Activated CD4-positive, alpha-beta T cell treated with anti-CD3 and anti-CD28 coated beads for 36 hours (primary cell): ENCODE measurements at regions of chr9 and their contacts with region 1.

Region 1: GRCh38 chr9:35138682-35139470 is 22.9 kb upstream of the UNC13B start:
- DNase-seq: no peak
- ATAC-seq: no peak
- H3K4me3 Mint-ChIP-seq: no peak overlapping the region
- H3K27ac Mint-ChIP-seq: no peak overlapping the region
- H3K4me1 Mint-ChIP-seq: no peaks in the 10 kb centered on the region
- H3K27me3 Mint-ChIP-seq: no peaks in the 10 kb centered on the region

Region 2: DNA sequence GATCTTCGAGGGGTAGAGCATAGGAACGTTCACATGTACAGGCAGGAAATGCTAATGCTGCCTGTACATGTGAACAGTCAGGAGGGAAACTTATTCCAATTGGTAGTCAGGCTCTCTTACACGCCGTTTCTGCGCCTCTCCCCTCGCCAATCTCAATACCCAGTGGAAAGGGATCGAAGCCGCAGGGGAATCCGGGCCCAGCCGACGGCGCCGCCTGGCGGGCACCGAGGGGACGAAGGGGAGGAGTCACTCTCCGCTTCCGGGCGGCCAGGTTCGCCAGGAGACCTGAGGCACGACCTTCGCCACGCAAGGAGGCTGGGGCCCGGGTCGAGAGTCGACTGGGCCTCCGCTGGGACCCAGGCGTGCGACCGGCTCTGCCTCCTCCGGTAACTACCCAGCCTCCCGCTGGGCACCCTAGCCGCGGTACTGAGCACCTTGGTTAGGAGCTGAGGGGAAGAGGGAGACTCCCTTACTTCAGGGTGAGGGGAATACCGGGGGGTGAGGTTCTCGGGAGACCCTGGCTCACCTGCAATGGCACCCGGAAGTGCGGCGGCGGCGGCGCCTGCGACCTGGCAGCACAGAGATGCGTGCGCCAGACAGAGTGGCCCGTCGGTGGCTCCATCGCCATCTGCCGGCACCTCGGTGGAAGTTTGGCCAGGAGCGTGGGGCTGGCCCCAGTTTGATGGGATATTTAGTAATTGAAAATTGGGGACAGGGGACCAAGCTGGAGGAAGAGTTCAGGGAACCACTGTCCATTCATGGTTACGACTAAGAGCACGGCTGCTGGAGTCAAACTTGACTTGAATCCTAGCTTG is 42.6 kb before region 1 on chr9 and contains the start of gene PIGO:
- CTCF ChIA-PET with region 1: no interaction called
- POLR2A ChIA-PET with region 1: no interaction called
- intact Hi-C with region 1: no loop called
- DNase-seq: peak; percentile 95
- ATAC-seq: peak; percentile 91
- H3K4me3 Mint-ChIP-seq: peak within 1 kb of the TSS; percentile 85
- H3K27ac Mint-ChIP-seq: peak within 1 kb of the TSS; percentile 92
- H3K4me1 Mint-ChIP-seq: peaks cover 25% of the 10 kb centered on the region
- H3K27me3 Mint-ChIP-seq: no peaks in the 10 kb centered on the region
- total RNA-seq, gene PIGO: 21.0 to 27.2 TPM

Region 3: DNA sequence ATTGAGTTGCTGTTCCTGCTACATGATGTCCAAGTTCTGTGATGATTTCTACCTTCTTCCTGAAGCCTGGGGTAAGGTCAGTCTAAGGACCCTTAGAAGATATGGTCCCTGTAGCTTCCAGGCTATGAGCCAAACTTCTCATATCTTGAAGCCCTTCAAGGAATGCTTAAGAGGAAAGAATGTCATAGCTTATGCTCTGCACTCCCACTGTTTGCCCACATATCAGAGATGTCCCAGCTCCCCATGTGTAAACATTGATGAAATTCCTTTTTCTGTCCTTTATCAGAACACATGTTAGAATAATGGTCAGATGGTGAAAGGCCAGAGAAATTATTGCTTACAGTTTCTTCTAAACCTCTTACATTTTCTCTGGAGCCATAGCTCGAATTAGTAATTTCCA is 309.6 kb after region 1 on chr9:
- CTCF ChIA-PET with region 1: no interaction called
- POLR2A ChIA-PET with region 1: no interaction called
- intact Hi-C with region 1: loop called in 1 of 2 experiments (anchors 10 kb)
- DNase-seq: no peak
- ATAC-seq: no peak
- H3K4me3 Mint-ChIP-seq: no peak overlapping the region
- H3K27ac Mint-ChIP-seq: no peak overlapping the region
- H3K4me1 Mint-ChIP-seq: no peaks in the 10 kb centered on the region
- H3K27me3 Mint-ChIP-seq: peaks cover 15% of the 10 kb centered on the region